Activated CD4-positive, alpha-beta T cell treated with anti-CD3 and anti-CD28 coated beads, Interleukin-2, amount 10 ng/mL, durations not matched to agents 24 days and 14 days (primary cell): ENCODE measurements at regions of chr7 and their contacts with region 1.

Region 1: GRCh38 chr7:155804897-155805825 is 7.1 kb downstream of the SHH start:
- DNase-seq: peak; percentile 86
- H3K4me3 Mint-ChIP-seq: peak overlapping the region; percentile 62
- H3K27ac Mint-ChIP-seq: no peak overlapping the region
- H3K4me1 Mint-ChIP-seq: peaks cover 15% of the 10 kb centered on the region
- H3K27me3 Mint-ChIP-seq: peaks cover 58% of the 10 kb centered on the region

Region 2: DNA sequence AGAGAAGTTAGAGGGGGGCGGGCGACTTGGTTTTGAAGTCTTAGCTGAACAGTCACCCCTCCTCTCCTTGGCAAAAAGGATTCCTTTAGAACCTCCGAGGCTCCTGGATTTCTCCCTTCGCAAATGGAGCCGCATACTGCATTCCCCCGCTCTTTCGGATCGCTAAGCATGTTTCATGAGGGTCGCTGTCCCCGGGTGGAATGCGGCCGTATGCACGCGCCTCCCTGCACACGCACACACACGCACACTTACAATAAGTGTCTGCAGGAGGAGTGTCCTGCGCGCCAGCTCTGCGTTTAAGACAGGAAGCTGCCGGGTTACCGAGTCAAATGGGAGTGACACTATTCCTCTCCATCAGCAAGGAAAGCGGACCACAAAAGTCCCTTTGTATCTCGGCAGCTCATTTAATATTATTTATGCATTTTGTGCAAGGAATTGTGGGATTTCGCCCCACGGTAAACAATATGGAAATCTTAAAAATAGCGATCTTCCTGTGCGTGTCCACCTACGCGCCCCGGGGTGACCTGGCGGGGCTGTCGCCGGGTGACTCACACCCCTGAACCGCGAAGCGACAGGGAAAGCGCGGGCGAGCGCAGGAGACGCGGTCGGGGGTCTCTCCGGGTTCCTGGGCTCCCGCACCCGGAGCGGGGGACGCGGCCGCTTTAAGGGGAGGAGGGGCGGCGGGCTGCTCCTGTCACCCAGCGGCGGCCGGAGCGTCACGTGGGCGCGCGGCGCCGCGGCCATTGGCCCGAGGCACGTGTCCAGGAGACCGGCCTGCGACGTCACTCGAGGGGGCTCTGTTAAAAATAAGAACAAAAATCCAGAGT is 348.2 kb before region 1 on chr7:
- intact Hi-C with region 1: loop called (anchors 2 kb)
- DNase-seq: no peak
- H3K4me3 Mint-ChIP-seq: peak overlapping the region; percentile 64
- H3K27ac Mint-ChIP-seq: peak overlapping the region; percentile 79
- H3K4me1 Mint-ChIP-seq: peaks cover 9% of the 10 kb centered on the region
- H3K27me3 Mint-ChIP-seq: peaks cover 72% of the 10 kb centered on the region

Region 3: DNA sequence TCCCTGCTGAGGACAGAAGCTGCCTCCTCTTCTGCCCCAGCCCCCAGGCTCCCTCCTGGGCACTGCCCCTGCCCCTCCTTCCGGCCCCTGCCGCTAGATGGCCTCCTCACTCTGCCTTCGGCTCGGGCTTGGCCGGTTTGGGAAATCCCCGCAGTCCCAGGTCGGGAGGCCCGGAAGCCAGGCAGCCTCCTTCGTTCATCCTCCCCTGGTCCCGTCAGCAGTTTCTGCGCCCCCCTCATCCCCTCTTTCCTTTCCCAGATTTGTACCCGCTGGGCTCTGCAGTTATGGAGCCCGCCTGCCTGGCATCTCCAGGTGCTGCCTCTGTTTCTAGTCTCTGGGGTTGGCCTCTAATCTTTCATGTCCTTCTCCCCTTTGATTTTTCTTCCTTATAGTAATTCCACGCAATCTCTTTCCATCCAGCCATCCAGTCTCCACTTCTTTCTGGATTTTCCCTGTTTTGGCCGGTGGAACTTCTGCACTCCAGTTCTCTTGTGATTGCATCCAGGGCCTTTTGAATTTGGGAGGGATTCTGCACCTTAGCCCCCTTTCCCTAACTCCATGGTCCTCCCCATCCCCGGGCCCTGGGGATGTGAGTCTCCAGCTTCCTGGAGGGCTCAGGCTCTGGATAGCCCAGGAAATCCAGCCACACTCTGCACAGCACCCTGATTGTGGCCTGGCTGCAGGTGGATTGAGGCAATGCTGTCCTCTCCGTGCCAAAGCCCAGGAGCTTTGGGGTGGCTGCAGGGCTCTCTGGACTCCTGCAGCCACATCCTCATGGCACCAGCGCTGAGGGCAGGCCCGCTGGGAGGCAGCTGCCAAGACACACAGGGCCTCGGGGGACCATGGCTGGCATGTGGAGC is 10.4 kb after region 1 on chr7:
- intact Hi-C with region 1: loop called (anchors 1 kb)
- DNase-seq: peak; percentile 93
- H3K4me3 Mint-ChIP-seq: peak overlapping the region; percentile 34
- H3K27ac Mint-ChIP-seq: no peak overlapping the region
- H3K4me1 Mint-ChIP-seq: peaks cover 15% of the 10 kb centered on the region
- H3K27me3 Mint-ChIP-seq: peaks cover 42% of the 10 kb centered on the region

Region 4: GRCh38 chr7:156096771-156097538 is 291.8 kb after region 1 on chr7:
- intact Hi-C with region 1: no loop called
- DNase-seq: no peak
- H3K4me3 Mint-ChIP-seq: no peak overlapping the region
- H3K27ac Mint-ChIP-seq: no peak overlapping the region
- H3K4me1 Mint-ChIP-seq: peaks cover 3% of the 10 kb centered on the region
- H3K27me3 Mint-ChIP-seq: no peaks in the 10 kb centered on the region

Region 5: DNA sequence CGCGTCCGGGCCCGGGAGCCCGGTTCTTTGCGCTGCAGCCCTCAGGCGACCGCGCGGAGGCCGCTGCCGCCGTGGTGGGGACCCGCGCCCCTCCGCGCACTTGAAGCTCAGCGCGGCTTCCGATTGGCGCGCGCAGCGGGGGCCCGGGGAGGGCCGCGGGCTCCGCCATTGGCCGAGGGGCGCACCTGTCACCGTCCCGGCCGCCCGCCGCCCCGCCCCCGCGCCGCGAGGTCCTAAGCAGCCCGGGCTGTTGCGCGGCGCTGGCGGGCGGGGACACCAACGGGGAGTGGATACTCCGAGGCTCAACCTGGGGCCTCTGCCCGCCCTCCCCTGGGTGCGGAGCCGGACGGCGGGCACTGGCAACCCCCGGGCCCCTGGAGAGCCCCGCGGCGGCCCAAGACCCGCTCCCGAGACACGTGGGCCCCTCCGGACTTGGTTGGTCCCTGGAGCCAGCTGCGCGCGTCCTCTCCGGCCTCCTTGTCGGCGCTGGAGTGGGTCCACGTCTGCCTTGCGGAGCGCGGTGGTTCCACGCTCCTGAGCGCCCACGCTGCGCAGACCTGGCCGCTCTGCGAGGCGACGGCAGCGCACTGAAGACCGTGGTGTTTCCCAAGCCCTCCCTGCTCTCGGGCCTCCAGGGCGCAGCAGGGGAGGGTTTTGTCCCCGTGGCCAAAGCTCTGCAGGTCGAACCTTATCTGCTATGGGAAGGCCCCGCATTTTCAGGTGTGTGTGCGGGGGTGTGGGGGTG is 1205.6 kb after region 1 on chr7 and contains the start of gene MNX1:
- intact Hi-C with region 1: loop called (anchors 2 kb)
- DNase-seq: peak; percentile 83
- H3K4me3 Mint-ChIP-seq: peak within 1 kb of the TSS; percentile 67
- H3K27ac Mint-ChIP-seq: peak within 1 kb of the TSS; percentile 48
- H3K4me1 Mint-ChIP-seq: peaks cover 8% of the 10 kb centered on the region
- H3K27me3 Mint-ChIP-seq: peaks cover 74% of the 10 kb centered on the region
- total RNA-seq, gene MNX1: not detected in 2 replicates